CD4-positive, alpha-beta T cell (primary cell): ENCODE measurements at regions of chr6 and their contacts with region 1.

Region 1: DNA sequence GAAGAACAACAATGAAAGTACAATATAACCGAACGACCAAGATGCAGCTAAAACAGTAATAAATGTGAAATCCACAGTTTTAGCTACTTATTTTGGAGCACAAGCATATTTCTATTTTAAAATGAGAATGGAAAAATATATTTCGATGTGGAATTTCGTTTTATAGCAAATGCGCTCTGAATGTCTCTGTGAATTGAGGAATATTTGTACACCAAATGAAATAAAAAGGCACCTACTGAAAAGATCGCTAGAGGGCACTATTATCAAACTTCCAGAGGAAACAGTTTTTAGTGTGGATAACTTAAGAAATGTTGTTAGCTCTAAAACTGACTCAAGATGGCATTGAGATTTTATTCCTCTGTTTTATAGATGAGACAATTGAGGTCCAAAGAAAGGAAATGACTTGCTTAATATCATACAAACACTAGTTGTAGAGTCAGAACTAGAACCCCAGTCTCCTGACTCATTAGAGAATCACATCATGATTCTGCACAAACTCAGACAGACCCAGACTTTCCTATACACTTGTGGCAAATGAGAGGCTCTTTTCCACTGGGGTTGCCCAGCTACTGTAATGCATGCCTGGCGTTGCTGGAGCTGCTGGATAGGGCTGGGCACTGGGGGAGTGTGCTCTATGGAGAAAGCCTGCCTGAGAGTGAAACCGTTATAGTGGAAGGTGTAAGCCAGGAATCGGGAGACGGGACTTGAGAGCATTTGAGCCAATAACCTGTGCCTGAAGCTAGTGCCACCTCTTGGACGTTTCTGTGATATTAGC is 51.9 kb downstream of the GCLC start:
- DNase-seq: peak in 3 of 14 experiments; percentile 63 to 68 (median 66)
- ATAC-seq: peak; percentile 46
- H3K4me3 ChIP-seq: no peak overlapping the region
- H3K4me3 Mint-ChIP-seq: no peak overlapping the region
- H3K27ac ChIP-seq: no peak overlapping the region
- H3K27ac Mint-ChIP-seq: no peak overlapping the region
- H3K4me1 ChIP-seq: peaks cover 3% of the 10 kb centered on the region
- H3K4me1 Mint-ChIP-seq: no peaks in the 10 kb centered on the region
- H3K27me3 ChIP-seq: no peaks in the 10 kb centered on the region
- H3K27me3 Mint-ChIP-seq: peaks cover 18% of the 10 kb centered on the region
- CTCF ChIP-seq: peak; percentile 87

Region 2: DNA sequence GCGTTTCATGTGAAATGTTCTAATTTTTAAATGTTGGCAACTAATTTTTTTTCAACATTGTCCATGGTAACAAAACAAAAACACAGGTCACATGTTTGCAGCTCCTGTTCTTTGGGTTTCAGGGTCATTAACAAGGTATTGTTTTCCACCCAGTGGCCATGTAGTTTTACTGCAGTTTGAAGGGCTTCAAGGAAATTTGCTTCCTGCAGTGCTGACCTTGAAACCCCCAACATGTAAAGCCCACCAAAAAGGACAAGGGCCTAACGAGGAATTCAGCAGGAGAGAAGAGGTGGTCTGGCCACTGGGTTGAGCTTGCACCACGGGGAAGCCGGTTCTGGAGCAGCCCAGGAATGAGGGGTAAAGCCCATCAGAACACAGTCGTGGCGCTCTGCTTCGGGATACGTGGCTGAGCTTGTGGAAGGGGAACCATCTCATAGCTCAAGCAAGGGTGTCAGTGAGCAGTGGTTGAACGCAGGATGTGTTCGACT is 186.4 kb after region 1 on chr6:
- CTCF ChIA-PET with region 1: interaction called, 3 read pairs
- POLR2A ChIA-PET with region 1: no interaction called
- intact Hi-C with region 1: loop called in 1 of 2 experiments (anchors 1 kb)
- DNase-seq: peak in 3 of 14 experiments; percentile 44 to 59 (median 45)
- ATAC-seq: peak; percentile 43
- H3K4me3 ChIP-seq: no peak overlapping the region
- H3K4me3 Mint-ChIP-seq: no peak overlapping the region
- H3K27ac ChIP-seq: no peak overlapping the region
- H3K27ac Mint-ChIP-seq: no peak overlapping the region
- H3K4me1 ChIP-seq: no peaks in the 10 kb centered on the region
- H3K4me1 Mint-ChIP-seq: no peaks in the 10 kb centered on the region
- H3K27me3 ChIP-seq: no peaks in the 10 kb centered on the region
- H3K27me3 Mint-ChIP-seq: no peaks in the 10 kb centered on the region
- CTCF ChIP-seq: no peak

Region 3: GRCh38 chr6:53811082-53811481 is 318.0 kb after region 1 on chr6:
- CTCF ChIA-PET with region 1: no interaction called
- POLR2A ChIA-PET with region 1: no interaction called
- intact Hi-C with region 1: no loop called
- DNase-seq: no peak
- ATAC-seq: no peak
- H3K4me3 ChIP-seq: no peak overlapping the region
- H3K4me3 Mint-ChIP-seq: no peak overlapping the region
- H3K27ac ChIP-seq: no peak overlapping the region
- H3K27ac Mint-ChIP-seq: no peak overlapping the region
- H3K4me1 ChIP-seq: no peaks in the 10 kb centered on the region
- H3K4me1 Mint-ChIP-seq: no peaks in the 10 kb centered on the region
- H3K27me3 ChIP-seq: no peaks in the 10 kb centered on the region
- H3K27me3 Mint-ChIP-seq: no peaks in the 10 kb centered on the region
- CTCF ChIP-seq: no peak